ENCODE measurements at regions of chr7 and their contacts with region 1.

Region 1: GRCh38 chr7:127708788-127709187 is 56.8 kb downstream of the SND1 start:
- DNase-seq: peak; percentile 82
- ATAC-seq: peak; percentile 85
- H3K4me3 Mint-ChIP-seq: no peak overlapping the region
- H3K27ac Mint-ChIP-seq: no peak overlapping the region
- H3K4me1 Mint-ChIP-seq: peaks cover 7% of the 10 kb centered on the region
- H3K27me3 Mint-ChIP-seq: no peaks in the 10 kb centered on the region

Region 2: DNA sequence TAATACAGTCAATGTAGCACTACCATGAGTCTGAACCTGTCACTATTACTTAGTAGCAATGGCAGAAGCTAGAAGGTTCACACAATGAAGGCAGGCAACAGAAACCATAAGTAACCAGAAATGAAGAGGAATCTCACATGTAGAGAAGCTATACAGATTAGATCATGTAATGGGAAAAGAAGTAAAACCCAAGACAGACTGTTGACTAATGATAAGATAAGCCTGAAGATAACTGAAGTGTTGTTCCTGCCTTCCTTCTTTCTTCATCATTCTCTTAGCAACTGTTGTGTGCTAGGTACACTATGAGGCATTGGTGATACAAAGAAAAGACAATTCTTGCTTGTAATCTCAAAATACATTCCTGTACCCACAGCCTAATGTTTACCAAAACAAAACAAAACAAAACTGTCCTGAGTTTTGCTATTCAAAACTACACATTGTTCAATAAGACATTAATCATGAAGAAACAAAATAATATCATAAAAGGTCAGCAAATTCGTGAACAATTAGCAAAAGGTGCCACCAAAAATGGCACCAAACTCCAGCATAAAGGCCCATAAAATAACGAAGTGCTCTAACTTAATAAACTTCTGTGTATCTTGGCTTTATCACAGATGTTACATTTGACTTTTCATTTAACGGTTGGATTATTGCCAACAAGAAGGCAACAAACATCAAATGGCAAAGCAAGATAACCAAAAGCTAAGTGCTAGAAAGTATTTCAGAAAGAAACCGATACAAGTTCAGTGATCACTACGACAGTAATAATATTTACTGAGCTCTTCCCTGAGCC is 343.4 kb before region 1 on chr7:
- CTCF ChIA-PET with region 1: no interaction called
- POLR2A ChIA-PET with region 1: no interaction called
- intact Hi-C with region 1: no loop called
- DNase-seq: no peak
- ATAC-seq: no peak
- H3K4me3 Mint-ChIP-seq: no peak overlapping the region
- H3K27ac Mint-ChIP-seq: no peak overlapping the region
- H3K4me1 Mint-ChIP-seq: peaks cover 28% of the 10 kb centered on the region
- H3K27me3 Mint-ChIP-seq: no peaks in the 10 kb centered on the region

Region 3: GRCh38 chr7:128010394-128011127 is 301.8 kb after region 1 on chr7:
- CTCF ChIA-PET with region 1: interaction called, 3 read pairs
- POLR2A ChIA-PET with region 1: no interaction called
- intact Hi-C with region 1: loop called in 1 of 2 experiments (anchors 10 kb)
- DNase-seq: peak; percentile 29
- ATAC-seq: peak; percentile 71
- H3K4me3 Mint-ChIP-seq: no peak overlapping the region
- H3K27ac Mint-ChIP-seq: no peak overlapping the region
- H3K4me1 Mint-ChIP-seq: peaks cover 2% of the 10 kb centered on the region
- H3K27me3 Mint-ChIP-seq: no peaks in the 10 kb centered on the region

Region 4: DNA sequence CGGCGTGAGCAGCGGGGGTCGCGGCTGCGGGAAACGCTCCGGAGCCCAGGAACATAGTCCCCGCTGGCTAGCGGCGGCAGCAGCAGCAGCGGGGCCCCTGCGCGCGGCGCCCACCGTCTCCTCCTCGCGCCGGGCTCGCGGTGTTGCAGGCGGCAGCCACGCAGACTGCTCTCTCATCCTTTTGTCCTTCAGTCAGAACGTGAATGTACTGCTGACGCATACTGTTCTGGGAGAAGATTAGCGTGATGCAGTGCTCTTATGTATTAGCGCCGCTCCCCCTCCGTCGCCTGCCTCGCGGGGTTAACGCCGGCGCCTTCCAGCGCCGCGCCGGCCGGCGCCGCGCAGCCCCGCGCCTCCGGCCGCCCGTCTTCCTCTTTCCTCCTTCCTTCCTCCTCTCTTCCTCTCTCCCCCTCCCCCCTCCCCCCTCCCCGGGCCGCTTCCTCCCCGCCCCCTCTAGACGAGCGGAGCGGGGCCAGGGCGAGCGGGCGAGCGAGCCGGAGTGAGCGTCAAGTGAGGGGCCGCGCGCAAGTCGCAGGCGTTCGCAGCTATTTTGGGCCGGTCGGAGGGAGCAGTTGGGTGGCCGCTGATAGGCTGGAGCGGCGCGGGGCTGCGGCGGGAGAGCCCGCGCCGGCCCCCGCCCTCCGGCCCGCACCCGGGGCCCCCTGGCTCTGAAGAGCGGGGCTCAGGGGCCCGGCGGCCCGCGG is 323.3 kb after region 1 on chr7:
- CTCF ChIA-PET with region 1: interaction called, 5 read pairs
- POLR2A ChIA-PET with region 1: no interaction called
- intact Hi-C with region 1: loop called in 1 of 2 experiments (anchors 2 kb)
- DNase-seq: peak; percentile 81
- ATAC-seq: peak; percentile 98
- H3K4me3 Mint-ChIP-seq: peak overlapping the region; percentile 64
- H3K27ac Mint-ChIP-seq: no peak overlapping the region
- H3K4me1 Mint-ChIP-seq: peaks cover 27% of the 10 kb centered on the region
- H3K27me3 Mint-ChIP-seq: no peaks in the 10 kb centered on the region

Region 5: GRCh38 chr7:128135515-128136214 is 426.9 kb after region 1 on chr7:
- CTCF ChIA-PET with region 1: interaction called, 9 read pairs
- POLR2A ChIA-PET with region 1: no interaction called
- intact Hi-C with region 1: loop called in 1 of 2 experiments (anchors 2 kb)
- DNase-seq: peak; percentile 83
- ATAC-seq: peak; percentile 92
- H3K4me3 Mint-ChIP-seq: peak overlapping the region; percentile 63
- H3K27ac Mint-ChIP-seq: no peak overlapping the region
- H3K4me1 Mint-ChIP-seq: peaks cover 21% of the 10 kb centered on the region
- H3K27me3 Mint-ChIP-seq: peaks cover 27% of the 10 kb centered on the region

Region 6: GRCh38 chr7:128322040-128322643 is 613.4 kb after region 1 on chr7:
- CTCF ChIA-PET with region 1: no interaction called
- POLR2A ChIA-PET with region 1: no interaction called
- intact Hi-C with region 1: loop called in 1 of 2 experiments (anchors 5 kb)
- DNase-seq: peak; percentile 15
- ATAC-seq: peak; percentile 61
- H3K4me3 Mint-ChIP-seq: no peak overlapping the region
- H3K27ac Mint-ChIP-seq: no peak overlapping the region
- H3K4me1 Mint-ChIP-seq: peaks cover 12% of the 10 kb centered on the region
- H3K27me3 Mint-ChIP-seq: no peaks in the 10 kb centered on the region